ENCODE measurements at regions of chr5 and their contacts with region 1.

Region 1: DNA sequence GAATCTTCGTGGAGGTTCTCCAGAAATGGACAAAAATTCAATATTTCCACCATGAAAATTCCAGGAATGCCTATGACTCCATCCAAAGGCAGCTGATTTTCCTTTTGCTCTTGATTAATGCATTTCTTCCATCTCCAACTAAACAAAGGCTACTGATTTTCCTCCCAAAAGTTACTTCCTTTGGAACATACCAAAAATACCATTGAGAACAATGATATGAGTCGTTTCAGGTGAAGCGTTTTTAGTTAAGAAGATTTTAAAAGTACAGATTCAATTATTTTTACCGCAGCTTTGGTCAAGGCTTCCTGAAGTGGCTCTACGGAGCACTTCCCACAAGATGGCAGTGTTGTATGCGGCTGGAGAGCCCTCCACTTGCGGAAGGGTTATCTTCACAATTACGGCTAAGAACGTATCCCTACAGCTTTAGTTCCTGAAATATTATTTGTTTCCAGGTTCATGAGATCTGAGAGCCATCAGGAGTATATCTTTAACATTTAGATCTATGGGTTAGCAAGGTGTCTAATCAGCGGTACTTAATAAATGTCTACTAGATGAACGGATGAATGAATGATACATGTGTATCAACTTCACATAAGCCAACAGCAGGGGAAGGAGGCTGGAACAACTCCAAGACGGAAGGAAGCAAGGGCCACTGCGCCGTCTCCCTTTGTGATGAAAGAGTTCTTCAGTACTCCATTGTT is 35.9 kb upstream of the ARSB start:
- DNase-seq: peak in 4 of 5 donors; percentile 28 to 47 (median 44)
- ATAC-seq: peak; percentile 64 to 91 (median 84)
- H3K4me3 ChIP-seq: peak overlapping the region in 5 of 12 donors; percentile 8 to 39 (median 23)
- H3K27ac ChIP-seq: no peak overlapping the region
- H3K4me1 ChIP-seq: peaks cover 0 to 11% (median 4%) of the 10 kb centered on the region in 12 donors
- H3K27me3 ChIP-seq: no peaks in the 10 kb centered on the region
- CTCF ChIP-seq: peak; percentile 64 to 89 (median 78)
- POLR2A ChIP-seq: no peak

Region 2: GRCh38 chr5:79109527-79110492 is 88.8 kb after region 1 on chr5:
- intact Hi-C with region 1: loop called in 3 of 10 experiments (anchors 5 kb)
- DNase-seq: no peak
- ATAC-seq: no peak
- H3K4me3 ChIP-seq: no peak overlapping the region
- H3K27ac ChIP-seq: no peak overlapping the region
- H3K4me1 ChIP-seq: peaks cover 0 to 27% (median 2%) of the 10 kb centered on the region in 12 donors
- H3K27me3 ChIP-seq: peaks cover 9 to 58% (median 31%) of the 10 kb centered on the region in 9 donors
- CTCF ChIP-seq: peak in 9 of 12 donors; percentile 23 to 59 (median 41)
- POLR2A ChIP-seq: no peak

Region 3: DNA sequence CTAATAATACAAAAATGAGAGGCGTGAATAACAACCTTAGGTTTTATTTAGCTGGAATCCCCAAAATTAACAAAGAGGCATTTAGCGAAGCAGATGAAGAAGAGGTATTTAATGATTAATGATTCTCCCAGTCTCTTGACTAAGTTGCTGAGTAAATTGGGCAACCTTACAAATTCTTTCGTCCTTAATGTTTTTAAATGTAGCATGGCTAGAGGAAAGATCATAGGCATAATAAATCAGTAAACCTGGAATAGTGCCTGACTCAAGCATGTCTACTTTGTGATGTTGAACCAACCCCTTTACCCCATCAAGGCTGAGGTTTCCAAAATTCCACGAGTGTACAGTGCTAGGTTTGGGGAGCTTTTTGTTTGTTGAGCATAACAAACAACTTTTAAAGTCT is 98.5 kb after region 1 on chr5:
- intact Hi-C with region 1: loop called in 3 of 10 experiments (anchors 5 kb)
- DNase-seq: no peak
- ATAC-seq: no peak
- H3K4me3 ChIP-seq: no peak overlapping the region
- H3K27ac ChIP-seq: no peak overlapping the region
- H3K4me1 ChIP-seq: peaks cover 0 to 6% (median 0%) of the 10 kb centered on the region in 12 donors
- H3K27me3 ChIP-seq: peaks cover 0 to 8% (median 0%) of the 10 kb centered on the region in 9 donors
- CTCF ChIP-seq: no peak
- POLR2A ChIP-seq: no peak

Region 4: DNA sequence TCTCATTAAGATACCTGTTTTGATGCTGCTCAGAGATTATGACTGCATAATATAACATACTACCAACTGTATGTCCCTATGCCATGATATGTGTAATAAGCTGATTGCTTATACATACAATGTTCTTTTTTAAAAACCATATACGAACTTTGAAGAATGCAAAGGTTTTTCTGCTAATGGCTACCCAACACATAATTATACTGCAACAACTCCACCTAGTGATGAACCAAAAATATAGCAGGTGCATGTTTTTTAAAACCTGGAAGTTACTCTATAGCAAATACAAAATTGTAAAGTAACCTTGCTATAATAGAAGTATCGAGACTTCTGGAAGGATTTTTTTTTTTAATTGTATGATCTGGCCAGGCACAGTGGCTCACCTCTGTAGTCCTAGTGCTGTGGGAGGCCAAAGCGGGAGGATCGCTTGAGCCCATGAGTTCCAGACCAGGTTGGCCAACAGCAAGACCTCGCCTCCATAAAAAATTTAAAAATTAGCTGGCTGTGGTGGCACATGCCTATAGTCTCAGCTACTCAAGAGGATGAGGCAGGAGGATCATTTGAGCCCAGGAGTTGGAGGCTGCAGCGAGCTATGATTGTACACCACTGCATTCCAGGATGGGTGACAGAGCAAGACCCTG is 443.8 kb after region 1 on chr5:
- intact Hi-C with region 1: loop called in 8 of 10 experiments (anchors 5 to 10 kb)
- DNase-seq: no peak
- ATAC-seq: peak in 2 of 4 donors; percentile 36 to 56
- H3K4me3 ChIP-seq: no peak overlapping the region
- H3K27ac ChIP-seq: no peak overlapping the region
- H3K4me1 ChIP-seq: peaks cover 0 to 22% (median 2%) of the 10 kb centered on the region in 12 donors
- H3K27me3 ChIP-seq: no peaks in the 10 kb centered on the region
- CTCF ChIP-seq: peak; percentile 26 to 69 (median 55)
- POLR2A ChIP-seq: no peak

Region 5: GRCh38 chr5:79535477-79536192 is 514.6 kb after region 1 on chr5:
- intact Hi-C with region 1: loop called in 5 of 10 experiments (anchors 5 to 10 kb)
- DNase-seq: no peak
- ATAC-seq: peak in 2 of 4 donors; percentile 54 to 58
- H3K4me3 ChIP-seq: no peak overlapping the region
- H3K27ac ChIP-seq: no peak overlapping the region
- H3K4me1 ChIP-seq: no peaks in the 10 kb centered on the region
- H3K27me3 ChIP-seq: no peaks in the 10 kb centered on the region
- CTCF ChIP-seq: peak in 11 of 12 donors; percentile 6 to 55 (median 42)
- POLR2A ChIP-seq: no peak

Measured in heart left ventricle (tissue), 16 donors.